ENCODE measurements at regions of chr6 and their contacts with region 1.

Region 1: GRCh38 chr6:121849477-121849876 is 414.0 kb downstream of the GJA1 start:
- DNase-seq: peak; percentile 73 to 85
- H3K4me3 ChIP-seq: no peak overlapping the region
- H3K27ac ChIP-seq: no peak overlapping the region
- H3K4me1 ChIP-seq: peaks cover 0 to 19% (median 13%) of the 10 kb centered on the region in 4 experiments; a peak in 5 of 7 replicates
- H3K27me3 ChIP-seq: no peaks in the 10 kb centered on the region
- CTCF ChIP-seq: peak; percentile 17 to 84 (median 71)
- EP300 ChIP-seq: no peak
- POLR2A ChIP-seq: no peak
- RAD21 ChIP-seq: peak; percentile 96 to 97

Region 2: DNA sequence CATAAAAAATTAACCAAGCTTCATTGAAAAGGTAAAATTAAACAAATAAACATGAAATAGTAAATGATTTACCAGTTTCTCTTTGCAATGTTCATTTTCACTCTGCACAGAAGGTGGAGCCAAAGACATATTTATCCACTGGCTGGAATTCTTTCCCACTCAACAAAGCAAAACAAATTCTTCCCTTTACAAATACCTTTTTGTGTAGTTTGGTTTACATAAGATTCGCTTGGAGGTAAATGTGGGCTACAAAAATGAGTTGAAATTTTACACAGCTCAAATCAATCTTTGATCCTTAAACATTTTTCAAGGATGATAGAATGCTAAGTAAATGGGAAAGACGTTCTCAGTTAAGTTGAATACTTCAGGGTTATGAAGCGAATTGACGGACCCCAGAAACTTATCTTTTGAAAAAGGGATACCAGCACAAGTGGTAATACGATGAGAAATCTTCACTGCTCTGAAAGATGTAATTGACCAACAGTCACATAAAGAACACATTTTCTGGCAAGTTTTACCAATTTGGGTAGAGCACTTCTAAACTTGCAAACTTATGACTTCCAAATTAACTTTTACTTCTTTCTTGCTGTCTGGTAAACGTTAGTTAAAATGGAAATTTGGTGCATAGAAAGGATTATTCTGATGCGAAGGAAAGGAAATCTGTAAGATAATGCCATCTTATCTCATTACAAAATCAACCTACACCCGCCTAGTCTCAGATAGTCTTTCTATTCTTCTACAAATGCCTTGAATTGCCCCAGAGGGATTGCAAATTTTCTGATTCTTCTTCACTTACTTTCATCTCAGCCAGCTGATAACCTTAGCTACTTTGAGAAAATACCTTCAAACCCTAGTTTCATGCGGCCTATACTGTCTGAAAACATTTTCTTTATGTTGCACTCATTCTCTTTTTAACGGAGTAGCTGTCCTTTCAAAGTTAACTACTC is 418.7 kb before region 1 on chr6:
- CTCF ChIA-PET with region 1: interaction called, 31 read pairs
- POLR2A ChIA-PET with region 1: interaction called, 8 read pairs
- DNase-seq: no peak
- H3K4me3 ChIP-seq: peak overlapping the region in 1 of 4 experiments; percentile 50; a peak in 2 of 8 replicates
- H3K27ac ChIP-seq: peak overlapping the region; percentile 36; the same call in 1 of the 2 replicates
- H3K4me1 ChIP-seq: peaks cover 0 to 13% (median 3%) of the 10 kb centered on the region in 4 experiments; a peak in 4 of 7 replicates
- H3K27me3 ChIP-seq: no peaks in the 10 kb centered on the region
- CTCF ChIP-seq: peak in 2 of 3 experiments; percentile 41 to 68; a peak in 2 of 4 replicates
- EP300 ChIP-seq: no peak
- POLR2A ChIP-seq: no peak
- RAD21 ChIP-seq: peak; percentile 88 to 93

Region 3: GRCh38 chr6:121436960-121437850 is 412.3 kb before region 1 on chr6:
- CTCF ChIA-PET with region 1: interaction called, 31 read pairs
- POLR2A ChIA-PET with region 1: interaction called, 13 read pairs
- DNase-seq: no peak
- H3K4me3 ChIP-seq: peak overlapping the region; percentile 85 to 94 (median 92)
- H3K27ac ChIP-seq: peak overlapping the region; percentile 91
- H3K4me1 ChIP-seq: peaks cover 0 to 19% (median 5%) of the 10 kb centered on the region in 4 experiments; a peak in 5 of 7 replicates
- H3K27me3 ChIP-seq: no peaks in the 10 kb centered on the region
- CTCF ChIP-seq: no peak
- EP300 ChIP-seq: no peak
- POLR2A ChIP-seq: peak; percentile 41 to 59; a peak in 2 of 3 replicates
- RAD21 ChIP-seq: no peak

Region 4: GRCh38 chr6:121443971-121444541 is 405.4 kb before region 1 on chr6:
- CTCF ChIA-PET with region 1: interaction called, 15 read pairs
- POLR2A ChIA-PET with region 1: interaction called, 13 read pairs
- DNase-seq: no peak
- H3K4me3 ChIP-seq: peak overlapping the region in 1 of 4 experiments; percentile 46; a peak in 2 of 8 replicates
- H3K27ac ChIP-seq: no peak overlapping the region
- H3K4me1 ChIP-seq: peaks cover 0 to 18% (median 9%) of the 10 kb centered on the region in 4 experiments; a peak in 5 of 7 replicates
- H3K27me3 ChIP-seq: no peaks in the 10 kb centered on the region
- CTCF ChIP-seq: no peak
- EP300 ChIP-seq: no peak
- POLR2A ChIP-seq: peak in 1 of 2 experiments; percentile 28; a peak in 1 of 3 replicates
- RAD21 ChIP-seq: no peak

Region 5: GRCh38 chr6:121951918-121952379 is 102.5 kb after region 1 on chr6:
- CTCF ChIA-PET with region 1: no interaction called
- POLR2A ChIA-PET with region 1: no interaction called
- DNase-seq: no peak
- H3K4me3 ChIP-seq: no peak overlapping the region
- H3K27ac ChIP-seq: no peak overlapping the region
- H3K4me1 ChIP-seq: no peaks in the 10 kb centered on the region
- H3K27me3 ChIP-seq: no peaks in the 10 kb centered on the region
- CTCF ChIP-seq: no peak
- EP300 ChIP-seq: no peak
- POLR2A ChIP-seq: no peak
- RAD21 ChIP-seq: no peak

Region 6: GRCh38 chr6:122033539-122034181 is 184.2 kb after region 1 on chr6:
- CTCF ChIA-PET with region 1: interaction called, 12 read pairs
- POLR2A ChIA-PET with region 1: no interaction called
- DNase-seq: peak in 1 of 2 experiments; percentile 29
- H3K4me3 ChIP-seq: no peak overlapping the region
- H3K27ac ChIP-seq: no peak overlapping the region
- H3K4me1 ChIP-seq: peaks cover 0 to 3% (median under 1%) of the 10 kb centered on the region in 4 experiments; a peak in 1 of 7 replicates
- H3K27me3 ChIP-seq: no peaks in the 10 kb centered on the region
- CTCF ChIP-seq: peak in 2 of 3 experiments; percentile 50 to 59; a peak in 2 of 4 replicates
- EP300 ChIP-seq: no peak
- POLR2A ChIP-seq: no peak
- RAD21 ChIP-seq: peak; percentile 90 to 91

Measured in H1 (cell line).